ENCODE measurements at regions of chrX and their contacts with region 1.

Region 1: GRCh38 chrX:150975655-150976390 is 7.3 kb upstream of the HMGB3 start:
- DNase-seq: no peak
- H3K4me3 ChIP-seq: no peak overlapping the region
- H3K27ac ChIP-seq: no peak overlapping the region
- H3K4me1 ChIP-seq: no peaks in the 10 kb centered on the region
- H3K27me3 ChIP-seq: no peaks in the 10 kb centered on the region
- CTCF ChIP-seq: no peak

Region 2: DNA sequence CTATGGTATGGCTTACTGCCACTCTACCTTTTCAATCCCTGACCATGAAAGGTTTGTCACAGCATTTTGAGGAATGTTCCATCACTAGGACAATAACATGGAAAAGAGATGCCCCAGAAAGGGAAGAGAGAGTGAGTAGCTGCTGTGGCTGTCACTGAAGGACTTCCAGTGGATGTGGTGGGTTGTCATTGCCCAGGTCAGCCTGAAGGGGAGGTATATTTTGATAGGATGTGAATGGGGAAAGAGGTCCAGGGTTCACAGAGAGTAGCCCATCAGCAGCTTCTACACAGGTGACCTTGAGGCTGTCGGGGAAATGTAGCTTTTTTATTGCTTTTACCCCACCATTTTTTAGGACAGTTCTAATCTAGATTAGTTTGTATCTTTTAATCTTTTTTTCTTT is 376.6 kb before region 1 on chrX:
- intact Hi-C with region 1: no loop called
- DNase-seq: no peak
- H3K4me3 ChIP-seq: no peak overlapping the region
- H3K27ac ChIP-seq: no peak overlapping the region
- H3K4me1 ChIP-seq: no peaks in the 10 kb centered on the region
- H3K27me3 ChIP-seq: no peaks in the 10 kb centered on the region
- CTCF ChIP-seq: no peak

Region 3: GRCh38 chrX:150913511-150913910 is 62.3 kb before region 1 on chrX:
- intact Hi-C with region 1: loop called (anchors 10 kb)
- DNase-seq: no peak
- H3K4me3 ChIP-seq: no peak overlapping the region
- H3K27ac ChIP-seq: no peak overlapping the region
- H3K4me1 ChIP-seq: no peaks in the 10 kb centered on the region
- H3K27me3 ChIP-seq: no peaks in the 10 kb centered on the region
- CTCF ChIP-seq: no peak

Region 4: GRCh38 chrX:150926304-150926703 is 49.5 kb before region 1 on chrX:
- intact Hi-C with region 1: no loop called
- DNase-seq: no peak
- H3K4me3 ChIP-seq: no peak overlapping the region
- H3K27ac ChIP-seq: no peak overlapping the region
- H3K4me1 ChIP-seq: no peaks in the 10 kb centered on the region
- H3K27me3 ChIP-seq: no peaks in the 10 kb centered on the region
- CTCF ChIP-seq: no peak

Measured in tibial artery (tissue), 4 donors.